ENCODE measurements at regions of chr1 and their contacts with region 1.

Region 1: GRCh38 chr1:247210376-247211117 is 38.7 kb upstream of the ZNF124 start:
- DNase-seq: peak; percentile 96 to 99 (median 97)
- H3K4me3 ChIP-seq: peak overlapping the region; percentile 60 to 98 (median 91)
- H3K27ac ChIP-seq: peak overlapping the region in 57 of 59 donors; percentile 5 to 90 (median 77)
- H3K27me3 ChIP-seq: no peaks in the 10 kb centered on the region
- CTCF ChIP-seq: peak in 11 of 56 donors; percentile 6 to 48 (median 22)

Region 2: GRCh38 chr1:246931549-246932365 is 278.8 kb before region 1 on chr1 and contains the start of gene AHCTF1:
- intact Hi-C with region 1: loop called in 1 of 2 experiments (anchors 10 kb)
- DNase-seq: peak; percentile 85 to 97 (median 96)
- H3K4me3 ChIP-seq: peak within 1 kb of the TSS; percentile 65 to 97 (median 90)
- H3K27ac ChIP-seq: peak within 1 kb of the TSS; percentile 76 to 99 (median 96)
- H3K27me3 ChIP-seq: no peaks in the 10 kb centered on the region
- CTCF ChIP-seq: peak in 36 of 56 donors; percentile 5 to 48 (median 30)
- total RNA-seq, gene AHCTF1: 28.7 to 55.3 (median 41.8) TPM

Region 3: GRCh38 chr1:247111700-247112478 is 98.7 kb before region 1 on chr1:
- intact Hi-C with region 1: loop called in 1 of 2 experiments (anchors 10 kb)
- DNase-seq: peak in 4 of 10 donors; percentile 24 to 73 (median 30)
- H3K4me3 ChIP-seq: peak overlapping the region; percentile 46 to 92 (median 75)
- H3K27ac ChIP-seq: peak overlapping the region in 34 of 59 donors; percentile 2 to 87 (median 44)
- H3K27me3 ChIP-seq: no peaks in the 10 kb centered on the region
- CTCF ChIP-seq: peak in 5 of 56 donors; percentile 9 to 20 (median 14)

Region 4: DNA sequence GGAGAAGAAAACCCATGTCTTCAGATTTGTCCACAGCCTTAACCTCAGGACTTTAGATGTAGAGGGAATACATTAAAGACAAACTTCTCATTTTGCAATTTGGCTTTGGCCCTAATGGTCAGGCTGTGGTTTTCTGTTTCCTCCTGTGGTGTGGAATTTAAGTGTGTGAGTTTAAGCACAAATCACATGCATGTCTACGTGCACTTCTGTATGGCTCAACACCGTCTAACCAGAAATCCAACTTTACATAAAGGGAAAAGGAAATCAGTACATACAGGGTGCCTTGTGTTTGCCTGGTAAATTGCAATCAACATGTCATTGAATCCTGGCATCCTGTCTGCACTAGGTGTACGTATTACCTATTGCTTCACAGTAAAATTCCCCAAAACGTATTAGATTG is 37.6 kb before region 1 on chr1:
- intact Hi-C with region 1: loop called in 1 of 2 experiments (anchors 5 kb)
- DNase-seq: no peak
- H3K4me3 ChIP-seq: no peak overlapping the region
- H3K27ac ChIP-seq: no peak overlapping the region
- H3K27me3 ChIP-seq: no peaks in the 10 kb centered on the region
- CTCF ChIP-seq: no peak

Region 5: GRCh38 chr1:247331172-247331991 is 120.8 kb after region 1 on chr1 and contains the start of gene ZNF496:
- intact Hi-C with region 1: loop called (anchors 5 kb)
- DNase-seq: peak; percentile 48 to 86 (median 71)
- H3K4me3 ChIP-seq: peak within 1 kb of the TSS; percentile 69 to 99 (median 93)
- H3K27ac ChIP-seq: peak within 1 kb of the TSS; percentile 61 to 94 (median 85)
- H3K27me3 ChIP-seq: no peaks in the 10 kb centered on the region
- CTCF ChIP-seq: peak in 1 of 56 donors; percentile 4
- total RNA-seq, gene ZNF496: 18.3 to 43.2 (median 27.3) TPM

Region 6: GRCh38 chr1:247914941-247915662 is 704.6 kb after region 1 on chr1:
- intact Hi-C with region 1: no loop called
- DNase-seq: no peak
- H3K4me3 ChIP-seq: no peak overlapping the region
- H3K27ac ChIP-seq: no peak overlapping the region
- H3K27me3 ChIP-seq: peaks cover 0 to 6% (median 0%) of the 10 kb centered on the region in 45 donors
- CTCF ChIP-seq: no peak

Measured in dorsolateral prefrontal cortex (tissue), 120 donors.